ENCODE measurements at regions of chr12 and their contacts with region 1.

Region 1: GRCh38 chr12:68686595-68687521 is at the start of gene NUP107:
- DNase-seq: peak; percentile 95
- H3K4me3 Mint-ChIP-seq: peak within 1 kb of the TSS; percentile 99
- H3K27ac Mint-ChIP-seq: peak within 1 kb of the TSS; percentile 96
- H3K4me1 Mint-ChIP-seq: peaks cover 37% of the 10 kb centered on the region
- H3K27me3 Mint-ChIP-seq: peaks cover 3% of the 10 kb centered on the region
- total RNA-seq, gene NUP107: 123 and 135 TPM in 2 replicates

Region 2: GRCh38 chr12:68223083-68223747 is 463.6 kb before region 1 on chr12:
- intact Hi-C with region 1: loop called (anchors 1 kb)
- DNase-seq: peak; percentile 68
- H3K4me3 Mint-ChIP-seq: peak overlapping the region; percentile 79
- H3K27ac Mint-ChIP-seq: peak overlapping the region; percentile 61
- H3K4me1 Mint-ChIP-seq: peaks cover 56% of the 10 kb centered on the region
- H3K27me3 Mint-ChIP-seq: no peaks in the 10 kb centered on the region

Region 3: GRCh38 chr12:68331869-68332727 is 354.8 kb before region 1 on chr12 and contains the start of gene MDM1:
- intact Hi-C with region 1: loop called (anchors 1 kb)
- DNase-seq: peak; percentile 95
- H3K4me3 Mint-ChIP-seq: peak within 1 kb of the TSS; percentile 89
- H3K27ac Mint-ChIP-seq: peak within 1 kb of the TSS; percentile 77
- H3K4me1 Mint-ChIP-seq: peaks cover 55% of the 10 kb centered on the region
- H3K27me3 Mint-ChIP-seq: peaks cover 2% of the 10 kb centered on the region
- total RNA-seq, gene MDM1: 26.8 and 29.9 TPM in 2 replicates

Region 4: GRCh38 chr12:68374307-68374982 is 312.4 kb before region 1 on chr12:
- intact Hi-C with region 1: loop called (anchors 1 kb)
- DNase-seq: peak; percentile 60
- H3K4me3 Mint-ChIP-seq: peak overlapping the region; percentile 31
- H3K27ac Mint-ChIP-seq: peak overlapping the region; percentile 93
- H3K4me1 Mint-ChIP-seq: peaks cover 68% of the 10 kb centered on the region
- H3K27me3 Mint-ChIP-seq: no peaks in the 10 kb centered on the region

Region 5: GRCh38 chr12:68497702-68498101 is 189.2 kb before region 1 on chr12:
- intact Hi-C with region 1: loop called (anchors 1 kb)
- DNase-seq: no peak
- H3K4me3 Mint-ChIP-seq: peak overlapping the region; percentile 66
- H3K27ac Mint-ChIP-seq: peak overlapping the region; percentile 94
- H3K4me1 Mint-ChIP-seq: peaks cover 40% of the 10 kb centered on the region
- H3K27me3 Mint-ChIP-seq: no peaks in the 10 kb centered on the region

Region 6: GRCh38 chr12:68572661-68573060 is 114.2 kb before region 1 on chr12:
- intact Hi-C with region 1: no loop called
- DNase-seq: no peak
- H3K4me3 Mint-ChIP-seq: no peak overlapping the region
- H3K27ac Mint-ChIP-seq: no peak overlapping the region
- H3K4me1 Mint-ChIP-seq: peaks cover 13% of the 10 kb centered on the region
- H3K27me3 Mint-ChIP-seq: no peaks in the 10 kb centered on the region

Region 7: GRCh38 chr12:68641138-68641537 is 45.7 kb before region 1 on chr12:
- intact Hi-C with region 1: loop called (anchors 2 kb)
- DNase-seq: peak; percentile 36
- H3K4me3 Mint-ChIP-seq: peak overlapping the region; percentile 61
- H3K27ac Mint-ChIP-seq: peak overlapping the region; percentile 71
- H3K4me1 Mint-ChIP-seq: peaks cover 63% of the 10 kb centered on the region
- H3K27me3 Mint-ChIP-seq: no peaks in the 10 kb centered on the region

Region 8: DNA sequence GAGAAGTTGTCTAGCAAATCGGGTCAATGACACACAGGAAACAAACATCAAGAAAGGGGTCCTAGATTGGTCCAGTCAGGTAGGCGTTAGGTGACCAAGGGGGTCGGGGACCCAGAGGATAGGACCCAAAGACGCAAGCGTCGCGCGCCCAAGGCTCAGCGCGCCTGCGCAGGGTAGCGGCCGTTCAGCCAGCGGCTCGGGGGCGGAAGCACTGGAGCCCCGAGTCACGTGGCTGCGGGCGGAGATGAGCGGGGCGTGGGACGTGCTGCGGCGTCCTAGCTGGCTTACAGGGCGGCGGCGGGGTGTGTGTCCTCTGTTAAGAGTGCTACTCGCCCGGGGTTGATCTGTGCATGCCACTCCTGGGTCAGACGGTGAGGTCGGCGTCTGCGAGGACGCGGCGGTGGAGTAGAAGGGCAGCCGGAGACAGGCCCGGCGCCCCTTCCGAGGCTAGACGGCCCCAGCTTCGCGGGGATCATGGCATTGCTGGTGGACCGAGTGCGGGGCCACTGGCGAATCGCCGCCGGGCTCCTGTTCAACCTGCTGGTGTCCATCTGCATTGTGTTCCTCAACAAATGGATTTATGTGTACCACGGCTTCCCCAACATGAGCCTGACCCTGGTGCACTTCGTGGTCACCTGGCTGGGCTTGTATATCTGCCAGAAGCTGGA is 59.2 kb after region 1 on chr12 and contains the start of gene SLC35E3:
- intact Hi-C with region 1: loop called (anchors 1 kb)
- DNase-seq: peak; percentile 91
- H3K4me3 Mint-ChIP-seq: peak within 1 kb of the TSS; percentile 94
- H3K27ac Mint-ChIP-seq: peak within 1 kb of the TSS; percentile 87
- H3K4me1 Mint-ChIP-seq: peaks cover 50% of the 10 kb centered on the region
- H3K27me3 Mint-ChIP-seq: no peaks in the 10 kb centered on the region
- total RNA-seq, gene SLC35E3: 5.9 and 6.3 TPM in 2 replicates

Region 9: DNA sequence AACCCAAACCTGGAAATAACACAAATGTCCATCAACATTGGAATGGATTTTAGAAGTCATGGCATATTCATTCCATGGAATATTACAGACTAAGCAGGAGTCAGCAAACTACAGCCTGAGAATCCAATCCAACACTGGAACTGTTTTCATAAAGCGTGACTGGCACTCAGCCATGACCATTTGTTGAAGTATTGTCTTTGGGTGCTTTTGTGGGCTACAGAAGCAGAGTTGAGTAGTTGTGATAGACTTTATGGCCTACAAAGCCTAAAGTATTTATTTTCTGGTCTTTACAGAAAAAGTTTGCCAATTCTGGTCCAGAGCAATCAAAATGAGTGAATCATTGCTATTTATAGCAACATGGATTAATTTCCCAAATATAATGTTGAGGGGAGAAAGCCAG is 748.8 kb after region 1 on chr12:
- intact Hi-C with region 1: no loop called
- DNase-seq: no peak
- H3K4me3 Mint-ChIP-seq: no peak overlapping the region
- H3K27ac Mint-ChIP-seq: no peak overlapping the region
- H3K4me1 Mint-ChIP-seq: no peaks in the 10 kb centered on the region
- H3K27me3 Mint-ChIP-seq: peaks cover 8% of the 10 kb centered on the region